ENCODE measurements at regions of chr10 and their contacts with region 1.

Region 1: GRCh38 chr10:52779541-52780390 is 7.2 kb upstream of the MBL2 start:
- DNase-seq: no peak
- ATAC-seq: peak; percentile 28
- H3K4me3 Mint-ChIP-seq: no peak overlapping the region
- H3K27ac Mint-ChIP-seq: no peak overlapping the region
- H3K4me1 Mint-ChIP-seq: no peaks in the 10 kb centered on the region
- H3K27me3 Mint-ChIP-seq: no peaks in the 10 kb centered on the region
- CTCF ChIP-seq: no peak

Region 2: GRCh38 chr10:52740913-52741675 is 38.7 kb before region 1 on chr10:
- CTCF ChIA-PET with region 1: interaction called, 4 read pairs
- POLR2A ChIA-PET with region 1: no interaction called
- intact Hi-C with region 1: loop called (anchors 1 kb)
- DNase-seq: no peak
- ATAC-seq: peak; percentile 37
- H3K4me3 Mint-ChIP-seq: no peak overlapping the region
- H3K27ac Mint-ChIP-seq: no peak overlapping the region
- H3K4me1 Mint-ChIP-seq: no peaks in the 10 kb centered on the region
- H3K27me3 Mint-ChIP-seq: no peaks in the 10 kb centered on the region
- CTCF ChIP-seq: no peak